ENCODE measurements at regions of chr11 and their contacts with region 1.

Region 1: DNA sequence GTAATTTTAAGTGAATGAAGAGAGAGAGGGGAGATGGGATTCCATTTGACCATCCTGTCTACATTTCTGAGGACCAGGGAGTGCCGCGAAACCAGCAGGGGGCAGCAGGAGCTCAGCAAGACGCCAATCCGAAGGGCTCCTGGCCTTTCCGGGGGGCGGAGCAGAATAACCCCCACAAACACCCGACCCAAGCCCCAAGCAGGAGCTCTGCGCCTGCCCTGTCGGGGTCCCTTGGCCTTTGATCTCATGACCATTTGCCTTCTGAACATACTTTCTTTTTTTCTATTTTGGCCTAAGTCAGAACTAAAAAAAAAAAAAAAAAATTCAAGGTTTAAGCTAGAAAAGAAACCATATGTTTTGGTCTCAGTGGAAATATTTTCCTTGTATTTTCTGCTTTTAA is 21.9 kb upstream of the SCN2B start:
- DNase-seq: peak; percentile 73 to 90 (median 80)
- ATAC-seq: peak; percentile 38
- H3K4me3 ChIP-seq: no peak overlapping the region
- H3K4me3 Mint-ChIP-seq: no peak overlapping the region
- H3K27ac ChIP-seq: peak overlapping the region; percentile 3
- H3K27ac Mint-ChIP-seq: peak overlapping the region; percentile 52
- H3K4me1 ChIP-seq: peaks cover 43% of the 10 kb centered on the region
- H3K4me1 Mint-ChIP-seq: peaks cover 11% of the 10 kb centered on the region
- H3K27me3 ChIP-seq: no peaks in the 10 kb centered on the region
- H3K27me3 Mint-ChIP-seq: no peaks in the 10 kb centered on the region
- CTCF ChIP-seq: peak; percentile 92

Region 2: GRCh38 chr11:118216621-118217481 is 18.5 kb after region 1 on chr11:
- CTCF ChIA-PET with region 1: interaction called, 25 read pairs
- POLR2A ChIA-PET with region 1: interaction called, 8 read pairs
- intact Hi-C with region 1: loop called in 1 of 2 experiments (anchors 2 kb)
- DNase-seq: peak in 11 of 14 experiments; percentile 19 to 80 (median 37)
- ATAC-seq: peak; percentile 75
- H3K4me3 ChIP-seq: peak overlapping the region; percentile 40
- H3K4me3 Mint-ChIP-seq: peak overlapping the region; percentile 84
- H3K27ac ChIP-seq: peak overlapping the region; percentile 10 to 52
- H3K27ac Mint-ChIP-seq: no peak overlapping the region
- H3K4me1 ChIP-seq: peaks cover 89% of the 10 kb centered on the region
- H3K4me1 Mint-ChIP-seq: peaks cover 99% of the 10 kb centered on the region
- H3K27me3 ChIP-seq: no peaks in the 10 kb centered on the region
- H3K27me3 Mint-ChIP-seq: no peaks in the 10 kb centered on the region
- CTCF ChIP-seq: no peak

Region 3: DNA sequence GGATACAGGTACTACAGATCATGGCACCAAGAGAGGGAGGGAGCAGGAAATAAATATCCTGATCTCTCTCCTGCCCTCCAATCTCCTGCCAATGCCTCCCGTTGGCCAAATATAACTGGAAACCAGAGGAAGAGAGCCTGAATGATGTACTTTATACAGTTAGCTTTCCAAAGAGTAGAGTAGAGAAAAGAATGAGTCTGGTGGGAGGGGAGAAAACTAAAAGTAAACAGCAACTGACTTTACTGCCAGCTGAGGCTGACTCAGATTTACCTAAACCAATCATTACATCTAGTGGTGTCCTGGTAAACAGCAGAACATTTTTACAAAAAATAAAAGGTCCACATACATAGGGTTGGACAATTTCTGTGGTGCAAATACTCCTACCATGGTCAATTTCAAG is 48.7 kb after region 1 on chr11:
- CTCF ChIA-PET with region 1: interaction called, 19 read pairs
- POLR2A ChIA-PET with region 1: interaction called, 10 read pairs
- intact Hi-C with region 1: loop called in 1 of 2 experiments (anchors 5 kb)
- DNase-seq: peak in 3 of 14 experiments; percentile 21 to 38 (median 33)
- ATAC-seq: peak; percentile 27
- H3K4me3 ChIP-seq: no peak overlapping the region
- H3K4me3 Mint-ChIP-seq: peak overlapping the region; percentile 35
- H3K27ac ChIP-seq: peak overlapping the region in 1 of 2 donors; percentile 18
- H3K27ac Mint-ChIP-seq: peak overlapping the region; percentile 71
- H3K4me1 ChIP-seq: peaks cover 36% of the 10 kb centered on the region
- H3K4me1 Mint-ChIP-seq: peaks cover 77% of the 10 kb centered on the region
- H3K27me3 ChIP-seq: no peaks in the 10 kb centered on the region
- H3K27me3 Mint-ChIP-seq: no peaks in the 10 kb centered on the region
- CTCF ChIP-seq: no peak

Region 4: DNA sequence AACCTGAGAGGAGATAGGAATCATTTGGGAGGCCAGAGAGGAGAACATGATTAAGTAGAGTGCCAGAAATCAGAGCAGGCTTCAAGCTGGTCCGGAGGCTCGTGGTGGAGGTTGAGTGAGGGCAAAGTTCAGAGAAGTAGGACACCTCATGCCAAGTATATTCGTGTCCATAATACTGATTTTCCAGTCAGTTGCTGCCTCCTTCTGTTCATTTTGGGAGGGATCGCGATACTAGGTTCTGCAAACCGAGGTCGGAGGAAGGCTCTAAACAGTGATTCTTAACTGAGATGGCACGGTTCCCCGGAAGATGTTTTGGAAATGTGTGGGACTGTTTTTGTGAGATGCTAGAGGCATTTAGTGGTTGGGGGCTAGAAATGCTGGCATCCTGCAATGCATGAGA is 92.6 kb after region 1 on chr11:
- CTCF ChIA-PET with region 1: interaction called, 31 read pairs
- POLR2A ChIA-PET with region 1: interaction called, 12 read pairs
- intact Hi-C with region 1: loop called (anchors 1 kb)
- DNase-seq: peak in 12 of 14 experiments; percentile 11 to 78 (median 28)
- ATAC-seq: peak; percentile 70
- H3K4me3 ChIP-seq: no peak overlapping the region
- H3K4me3 Mint-ChIP-seq: no peak overlapping the region
- H3K27ac ChIP-seq: no peak overlapping the region
- H3K27ac Mint-ChIP-seq: no peak overlapping the region
- H3K4me1 ChIP-seq: peaks cover 9% of the 10 kb centered on the region
- H3K4me1 Mint-ChIP-seq: peaks cover 11% of the 10 kb centered on the region
- H3K27me3 ChIP-seq: no peaks in the 10 kb centered on the region
- H3K27me3 Mint-ChIP-seq: no peaks in the 10 kb centered on the region
- CTCF ChIP-seq: peak; percentile 68

Region 5: GRCh38 chr11:118314988-118315411 is 116.6 kb after region 1 on chr11:
- CTCF ChIA-PET with region 1: interaction called, 18 read pairs
- POLR2A ChIA-PET with region 1: interaction called, 3 read pairs
- intact Hi-C with region 1: no loop called
- DNase-seq: no peak
- ATAC-seq: no peak
- H3K4me3 ChIP-seq: no peak overlapping the region
- H3K4me3 Mint-ChIP-seq: peak overlapping the region; percentile 78
- H3K27ac ChIP-seq: peak overlapping the region; percentile 20 to 87
- H3K27ac Mint-ChIP-seq: peak overlapping the region; percentile 100
- H3K4me1 ChIP-seq: peaks cover 91% of the 10 kb centered on the region
- H3K4me1 Mint-ChIP-seq: peaks cover 96% of the 10 kb centered on the region
- H3K27me3 ChIP-seq: no peaks in the 10 kb centered on the region
- H3K27me3 Mint-ChIP-seq: no peaks in the 10 kb centered on the region
- CTCF ChIP-seq: no peak

Region 6: GRCh38 chr11:118488480-118489109 is 290.2 kb after region 1 on chr11:
- CTCF ChIA-PET with region 1: interaction called, 5 read pairs
- POLR2A ChIA-PET with region 1: no interaction called
- intact Hi-C with region 1: loop called (anchors 1 to 5 kb)
- DNase-seq: peak; percentile 67 to 91 (median 76)
- ATAC-seq: peak; percentile 88
- H3K4me3 ChIP-seq: no peak overlapping the region
- H3K4me3 Mint-ChIP-seq: no peak overlapping the region
- H3K27ac ChIP-seq: peak overlapping the region in 1 of 2 donors; percentile 37
- H3K27ac Mint-ChIP-seq: peak overlapping the region; percentile 4
- H3K4me1 ChIP-seq: peaks cover 2% of the 10 kb centered on the region
- H3K4me1 Mint-ChIP-seq: peaks cover 5% of the 10 kb centered on the region
- H3K27me3 ChIP-seq: no peaks in the 10 kb centered on the region
- H3K27me3 Mint-ChIP-seq: no peaks in the 10 kb centered on the region
- CTCF ChIP-seq: peak; percentile 89

Measured in CD4-positive, alpha-beta T cell (primary cell).